SK-N-SH (cell line): ENCODE measurements at regions of chr16 and their contacts with region 1.

Region 1: GRCh38 chr16:53054670-53055485 is at the start of gene CHD9:
- DNase-seq: peak; percentile 93
- H3K4me3 ChIP-seq: peak within 1 kb of the TSS; percentile 57 to 95
- H3K27ac ChIP-seq: peak within 1 kb of the TSS; percentile 88 to 91
- H3K4me1 ChIP-seq: peaks cover 12 to 14% of the 10 kb centered on the region in 2 experiments; a peak in 2 of 4 replicates
- H3K27me3 ChIP-seq: no peaks in the 10 kb centered on the region
- CTCF ChIP-seq: peak; percentile 92
- EP300 ChIP-seq: no peak; a peak in 1 of 4 replicates
- RAD21 ChIP-seq: peak; percentile 95
- polyA plus RNA-seq, gene CHD9: 6.2 and 9.2 TPM in 2 replicates

Region 2: GRCh38 chr16:53022374-53022773 is 32.5 kb before region 1 on chr16:
- CTCF ChIA-PET with region 1: no interaction called
- POLR2A ChIA-PET with region 1: no interaction called
- DNase-seq: peak; percentile 70
- H3K4me3 ChIP-seq: no peak overlapping the region
- H3K27ac ChIP-seq: no peak overlapping the region
- H3K4me1 ChIP-seq: no peaks in the 10 kb centered on the region
- H3K27me3 ChIP-seq: no peaks in the 10 kb centered on the region
- CTCF ChIP-seq: peak; percentile 74
- EP300 ChIP-seq: no peak
- RAD21 ChIP-seq: peak; percentile 95

Region 3: DNA sequence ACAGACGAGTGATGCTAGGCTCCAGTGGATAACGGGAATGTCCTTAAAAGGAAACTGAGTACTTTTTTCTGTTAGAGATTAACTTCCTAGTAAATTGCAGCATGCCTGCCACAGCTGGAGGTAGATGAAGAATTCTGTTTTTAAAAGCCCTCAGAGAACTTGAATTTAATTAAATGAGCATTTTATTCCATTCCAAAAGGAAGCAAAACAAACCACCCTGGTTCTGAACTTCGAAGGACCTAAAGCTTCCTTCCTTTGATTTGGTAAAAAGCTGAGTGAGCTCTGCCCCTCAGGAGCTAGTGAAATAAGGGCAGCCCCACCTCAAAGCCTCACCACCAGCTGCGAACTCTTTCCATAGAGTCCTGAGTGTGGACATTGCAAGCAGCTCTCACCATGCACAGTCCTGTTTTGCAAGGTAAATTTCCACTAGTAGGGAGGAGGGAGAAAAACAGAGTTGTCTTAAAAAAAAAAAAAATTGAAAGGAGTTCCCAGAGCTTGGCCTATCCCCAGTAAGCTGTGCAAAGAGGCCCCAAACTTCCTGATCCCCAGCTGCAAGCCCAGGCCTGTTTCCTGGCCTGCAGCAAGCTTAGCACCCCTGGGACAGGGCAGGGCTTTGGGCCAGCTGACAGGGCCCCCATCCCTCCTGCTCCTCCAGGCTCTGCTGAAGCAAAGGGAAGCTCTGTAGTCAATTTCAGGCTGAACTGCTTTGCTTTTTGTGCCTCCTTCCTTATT is 13.4 kb before region 1 on chr16:
- CTCF ChIA-PET with region 1: interaction called, 19 read pairs
- POLR2A ChIA-PET with region 1: no interaction called
- DNase-seq: no peak
- H3K4me3 ChIP-seq: no peak overlapping the region
- H3K27ac ChIP-seq: no peak overlapping the region; a peak in 1 of 4 replicates
- H3K4me1 ChIP-seq: peaks cover 0 to 9% of the 10 kb centered on the region in 2 experiments; a peak in 2 of 4 replicates
- H3K27me3 ChIP-seq: no peaks in the 10 kb centered on the region
- CTCF ChIP-seq: no peak
- EP300 ChIP-seq: no peak
- RAD21 ChIP-seq: no peak

Region 4: GRCh38 chr16:53080345-53081031 is 25.6 kb after region 1 on chr16:
- CTCF ChIA-PET with region 1: interaction called, 50 read pairs
- POLR2A ChIA-PET with region 1: interaction called, 7 read pairs
- DNase-seq: peak; percentile 78
- H3K4me3 ChIP-seq: peak overlapping the region; percentile 9 to 50; a peak in 3 of 4 replicates
- H3K27ac ChIP-seq: peak overlapping the region; percentile 91 to 96
- H3K4me1 ChIP-seq: peaks cover 54 to 58% of the 10 kb centered on the region in 2 experiments
- H3K27me3 ChIP-seq: no peaks in the 10 kb centered on the region
- CTCF ChIP-seq: no peak
- EP300 ChIP-seq: peak; percentile 44 to 88; a peak in 3 of 4 replicates
- RAD21 ChIP-seq: peak; percentile 47

Region 5: GRCh38 chr16:53111078-53111791 is 56.4 kb after region 1 on chr16:
- CTCF ChIA-PET with region 1: interaction called, 17 read pairs
- POLR2A ChIA-PET with region 1: no interaction called
- DNase-seq: no peak
- H3K4me3 ChIP-seq: no peak overlapping the region
- H3K27ac ChIP-seq: no peak overlapping the region
- H3K4me1 ChIP-seq: no peaks in the 10 kb centered on the region
- H3K27me3 ChIP-seq: no peaks in the 10 kb centered on the region
- CTCF ChIP-seq: no peak
- EP300 ChIP-seq: no peak
- RAD21 ChIP-seq: no peak

Region 6: DNA sequence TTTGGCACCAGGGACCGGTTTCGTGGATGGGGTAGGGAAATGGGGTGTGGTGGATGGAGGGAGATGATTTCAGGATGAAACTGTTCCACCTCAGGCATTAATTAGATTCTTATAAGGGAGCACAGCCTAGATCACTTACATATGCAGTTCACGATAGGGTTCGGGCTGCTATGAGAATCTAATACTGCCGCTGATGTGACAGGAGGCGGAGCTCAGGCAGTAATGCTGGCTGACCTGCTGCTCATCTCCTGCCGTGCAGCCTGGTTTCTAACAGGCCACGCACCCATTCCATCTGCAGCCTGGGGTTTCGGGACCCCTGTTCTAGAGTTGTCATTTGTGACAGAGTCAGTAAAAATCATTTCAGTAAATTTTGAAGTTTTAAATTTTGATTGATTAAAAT is 99.6 kb after region 1 on chr16:
- CTCF ChIA-PET with region 1: interaction called, 33 read pairs
- POLR2A ChIA-PET with region 1: no interaction called
- DNase-seq: peak; percentile 5
- H3K4me3 ChIP-seq: no peak overlapping the region
- H3K27ac ChIP-seq: no peak overlapping the region
- H3K4me1 ChIP-seq: peaks cover 5 to 7% of the 10 kb centered on the region in 2 experiments; a peak in 3 of 4 replicates
- H3K27me3 ChIP-seq: no peaks in the 10 kb centered on the region
- CTCF ChIP-seq: no peak
- EP300 ChIP-seq: no peak
- RAD21 ChIP-seq: no peak

Region 7: DNA sequence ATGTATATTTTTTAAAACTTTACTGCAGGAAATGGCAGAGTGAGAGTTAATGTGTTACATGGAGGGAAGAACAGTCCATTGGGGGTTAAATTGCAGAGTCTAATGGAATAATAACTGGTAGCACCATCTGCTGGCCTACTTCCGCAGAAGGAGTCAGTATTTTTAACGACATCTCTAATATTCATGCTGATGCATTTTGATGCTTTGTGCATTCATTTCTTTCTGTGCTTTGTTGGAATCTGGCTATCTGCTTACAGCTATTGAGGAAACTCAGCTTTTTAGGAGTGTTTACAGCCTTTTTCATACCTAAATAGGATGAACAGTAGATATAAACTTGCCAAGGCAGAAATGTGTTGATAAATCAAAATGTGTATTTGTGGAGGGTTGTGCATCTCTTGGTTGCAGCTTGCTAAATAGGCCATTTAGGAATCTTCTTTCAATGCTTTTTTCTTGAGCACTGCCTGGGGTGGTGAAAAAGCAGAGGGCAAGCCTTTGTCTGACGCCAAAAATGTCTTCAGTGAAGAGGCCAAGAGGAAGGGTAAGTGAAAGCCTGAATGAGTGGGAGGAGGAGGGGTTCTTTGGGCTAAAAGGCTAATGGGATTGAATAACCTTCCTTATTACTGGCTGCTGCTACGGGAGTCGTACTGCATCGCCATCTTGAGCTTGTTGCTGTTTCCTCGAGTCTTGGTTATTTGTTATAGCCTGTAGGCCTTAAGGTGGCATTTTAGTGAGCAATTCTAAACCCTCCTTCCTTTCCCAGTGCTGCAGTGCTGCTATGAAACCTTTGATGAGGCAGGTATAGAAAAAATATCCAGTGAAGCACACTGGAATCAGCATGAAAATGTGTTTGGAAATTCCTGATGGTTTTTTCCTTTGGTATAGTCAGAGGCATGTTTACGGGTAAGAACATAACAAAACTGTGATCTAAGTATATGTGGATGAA is 153.2 kb after region 1 on chr16:
- CTCF ChIA-PET with region 1: interaction called, 42 read pairs
- POLR2A ChIA-PET with region 1: interaction called, 5 read pairs
- DNase-seq: peak; percentile 77
- H3K4me3 ChIP-seq: peak overlapping the region; percentile 52 to 69
- H3K27ac ChIP-seq: peak overlapping the region; percentile 93 to 97
- H3K4me1 ChIP-seq: peaks cover 7 to 17% of the 10 kb centered on the region in 2 experiments; a peak in 2 of 4 replicates
- H3K27me3 ChIP-seq: no peaks in the 10 kb centered on the region
- CTCF ChIP-seq: peak; percentile 73
- EP300 ChIP-seq: peak in 1 of 2 experiments; percentile 25; a peak in 1 of 4 replicates
- RAD21 ChIP-seq: peak; percentile 75